ENCODE measurements at regions of chr16 and their contacts with region 1.

Region 1: DNA sequence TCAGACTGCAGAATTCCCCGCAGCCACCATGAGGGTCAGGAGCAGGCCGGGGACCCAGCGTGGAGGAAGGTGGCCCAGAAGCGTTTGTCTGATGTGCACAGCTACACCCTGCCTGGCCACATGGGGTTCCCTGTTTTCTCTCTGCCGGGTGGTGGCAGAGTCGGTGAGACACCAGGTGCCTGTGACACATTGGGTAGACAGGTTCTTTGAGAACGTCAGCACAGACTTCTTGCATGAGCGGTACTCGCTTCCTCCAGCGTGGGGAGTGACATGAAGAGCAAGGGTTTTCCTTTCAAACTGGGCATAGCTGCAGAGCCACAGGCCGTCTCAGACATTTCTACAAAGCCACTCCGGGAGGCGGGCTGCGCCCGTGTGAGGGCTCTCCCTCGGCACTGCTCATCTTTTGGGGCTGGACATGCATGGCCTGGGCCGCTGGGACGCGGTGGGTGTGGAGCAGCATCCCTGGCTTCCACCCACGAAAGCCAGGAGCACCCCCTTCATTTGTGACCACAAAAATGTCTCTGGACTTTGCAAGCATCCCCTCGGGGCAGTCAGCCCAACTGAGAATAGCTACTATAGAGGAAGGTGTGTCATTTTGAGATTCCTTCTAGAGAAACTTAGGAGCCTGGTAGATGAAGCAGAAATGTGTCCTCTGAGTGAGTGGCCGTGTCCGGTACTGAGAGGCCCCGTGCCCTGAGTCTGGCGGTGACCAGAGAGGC is 26.0 kb downstream of the NME3 start:
- DNase-seq: peak; percentile 91 to 94
- H3K4me3 ChIP-seq: peak overlapping the region; percentile 49; the same call in 1 of the 2 replicates
- H3K27ac ChIP-seq: peak overlapping the region; percentile 100
- H3K4me1 ChIP-seq: peaks cover 49% of the 10 kb centered on the region
- H3K27me3 ChIP-seq: no peaks in the 10 kb centered on the region
- CTCF ChIP-seq: no peak; the same call in 1 of the 2 replicates

Region 2: DNA sequence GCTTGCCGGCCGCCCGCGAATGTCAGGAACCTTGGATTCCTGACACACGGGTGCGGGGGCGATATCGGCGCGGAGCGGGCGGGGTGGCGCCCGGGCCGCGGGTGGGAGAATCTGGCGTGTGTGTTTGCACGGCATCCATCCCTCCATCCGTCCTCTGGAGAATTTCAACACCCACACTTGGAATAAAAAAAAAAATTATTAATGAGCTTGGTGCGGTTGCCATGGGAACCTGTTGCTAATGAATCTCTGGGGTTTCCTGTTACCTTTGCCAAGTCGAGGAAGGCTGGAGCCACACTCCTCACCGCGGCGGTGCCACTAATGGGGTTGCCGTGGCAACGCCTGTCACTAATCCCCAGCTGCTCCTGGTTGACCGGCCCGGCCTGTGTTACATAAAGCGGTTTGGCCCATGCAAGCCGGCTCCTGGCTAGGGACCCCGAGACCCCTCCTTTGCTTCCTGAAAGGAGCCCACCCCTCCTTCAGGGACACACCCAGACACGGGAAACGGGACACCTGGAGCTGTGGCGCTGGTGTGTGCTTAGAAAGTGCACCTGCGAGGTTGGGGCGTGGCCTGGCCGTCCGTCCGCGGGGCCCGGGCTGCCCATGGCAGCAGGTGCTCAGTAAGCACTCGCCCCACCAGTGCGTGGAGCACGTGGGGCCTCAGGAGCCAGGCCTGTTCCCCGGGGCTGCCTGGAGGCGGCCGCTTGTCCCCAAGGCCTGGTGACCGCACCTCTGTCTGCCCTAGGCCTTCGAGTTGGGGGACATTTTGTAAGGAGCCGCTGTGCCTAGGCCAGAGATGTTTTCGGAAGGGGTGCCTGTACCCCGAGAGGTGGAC is 577.8 kb before region 1 on chr16:
- CTCF ChIA-PET with region 1: no interaction called
- POLR2A ChIA-PET with region 1: no interaction called
- intact Hi-C with region 1: no loop called
- DNase-seq: no peak
- H3K4me3 ChIP-seq: no peak overlapping the region
- H3K27ac ChIP-seq: no peak overlapping the region
- H3K4me1 ChIP-seq: no peaks in the 10 kb centered on the region
- H3K27me3 ChIP-seq: peaks cover 93% of the 10 kb centered on the region
- CTCF ChIP-seq: no peak

Region 3: DNA sequence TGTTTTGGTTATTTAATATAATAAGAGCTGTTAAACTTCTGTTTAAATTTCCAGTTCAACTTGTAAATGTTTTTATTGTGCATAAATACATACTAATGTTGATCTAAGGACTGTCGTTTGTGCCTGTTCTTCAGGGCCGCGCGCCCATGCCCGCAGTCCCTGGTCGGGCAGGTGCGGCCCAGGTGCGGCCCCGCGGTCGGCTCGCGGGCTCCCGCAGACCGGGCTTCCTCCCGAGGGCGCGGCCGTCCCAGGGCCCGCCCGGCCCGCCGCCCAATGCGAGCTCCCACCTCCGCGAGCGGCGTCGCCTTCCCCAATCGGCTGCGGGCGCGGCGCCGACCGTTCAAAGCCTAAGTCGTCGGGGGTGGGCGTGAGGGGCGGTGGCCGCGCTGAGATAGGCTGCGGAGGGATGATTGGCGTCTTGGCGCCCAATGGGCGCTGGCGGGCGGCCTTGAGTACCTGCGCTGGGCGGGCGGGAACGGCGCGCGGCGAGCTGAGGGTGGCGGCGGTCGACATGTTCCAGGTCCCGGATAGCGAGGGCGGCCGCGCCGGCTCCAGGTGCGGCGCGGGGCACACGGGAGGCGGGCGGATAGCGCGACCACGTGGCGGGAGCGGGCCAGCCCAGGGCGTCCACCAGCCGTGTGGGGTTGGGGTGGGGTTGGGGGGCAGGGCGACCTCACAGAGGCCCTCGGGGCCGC is 67.4 kb before region 1 on chr16 and contains the start of gene JPT2:
- CTCF ChIA-PET with region 1: interaction called, 6 read pairs
- POLR2A ChIA-PET with region 1: interaction called, 4 read pairs
- intact Hi-C with region 1: loop called (anchors 2 kb)
- DNase-seq: peak; percentile 90 to 99
- H3K4me3 ChIP-seq: peak within 1 kb of the TSS; percentile 98
- H3K27ac ChIP-seq: peak within 1 kb of the TSS; percentile 82
- H3K4me1 ChIP-seq: peaks cover 27% of the 10 kb centered on the region
- H3K27me3 ChIP-seq: no peaks in the 10 kb centered on the region
- CTCF ChIP-seq: no peak
- total RNA-seq, gene JPT2: 199 and 244 TPM in 2 replicates

Region 4: DNA sequence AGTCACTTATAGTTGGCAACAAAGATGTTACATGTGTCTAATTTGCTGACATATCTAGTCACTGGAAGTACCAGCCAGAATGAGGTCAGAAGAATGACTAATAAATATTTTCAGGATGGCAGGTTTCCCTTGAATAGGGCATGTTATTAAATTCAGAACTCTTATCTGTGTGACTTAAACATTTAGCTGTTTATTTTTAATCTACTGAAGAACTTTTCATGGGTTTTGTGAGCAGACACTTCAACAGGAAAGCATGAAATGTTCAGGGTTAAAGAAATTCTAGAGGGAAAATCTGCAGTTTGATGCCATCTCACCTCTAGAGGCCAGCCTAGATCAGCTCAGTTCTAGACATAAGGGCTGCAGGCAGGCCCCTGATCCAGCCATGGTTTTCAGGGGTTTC is 54.1 kb before region 1 on chr16:
- CTCF ChIA-PET with region 1: interaction called, 6 read pairs
- POLR2A ChIA-PET with region 1: interaction called, 6 read pairs
- intact Hi-C with region 1: loop called (anchors 1 kb)
- DNase-seq: peak in 1 of 2 experiments; percentile 46
- H3K4me3 ChIP-seq: no peak overlapping the region
- H3K27ac ChIP-seq: peak overlapping the region; percentile 99
- H3K4me1 ChIP-seq: peaks cover 64% of the 10 kb centered on the region
- H3K27me3 ChIP-seq: no peaks in the 10 kb centered on the region
- CTCF ChIP-seq: no peak; the same call in 1 of the 2 replicates

Region 5: DNA sequence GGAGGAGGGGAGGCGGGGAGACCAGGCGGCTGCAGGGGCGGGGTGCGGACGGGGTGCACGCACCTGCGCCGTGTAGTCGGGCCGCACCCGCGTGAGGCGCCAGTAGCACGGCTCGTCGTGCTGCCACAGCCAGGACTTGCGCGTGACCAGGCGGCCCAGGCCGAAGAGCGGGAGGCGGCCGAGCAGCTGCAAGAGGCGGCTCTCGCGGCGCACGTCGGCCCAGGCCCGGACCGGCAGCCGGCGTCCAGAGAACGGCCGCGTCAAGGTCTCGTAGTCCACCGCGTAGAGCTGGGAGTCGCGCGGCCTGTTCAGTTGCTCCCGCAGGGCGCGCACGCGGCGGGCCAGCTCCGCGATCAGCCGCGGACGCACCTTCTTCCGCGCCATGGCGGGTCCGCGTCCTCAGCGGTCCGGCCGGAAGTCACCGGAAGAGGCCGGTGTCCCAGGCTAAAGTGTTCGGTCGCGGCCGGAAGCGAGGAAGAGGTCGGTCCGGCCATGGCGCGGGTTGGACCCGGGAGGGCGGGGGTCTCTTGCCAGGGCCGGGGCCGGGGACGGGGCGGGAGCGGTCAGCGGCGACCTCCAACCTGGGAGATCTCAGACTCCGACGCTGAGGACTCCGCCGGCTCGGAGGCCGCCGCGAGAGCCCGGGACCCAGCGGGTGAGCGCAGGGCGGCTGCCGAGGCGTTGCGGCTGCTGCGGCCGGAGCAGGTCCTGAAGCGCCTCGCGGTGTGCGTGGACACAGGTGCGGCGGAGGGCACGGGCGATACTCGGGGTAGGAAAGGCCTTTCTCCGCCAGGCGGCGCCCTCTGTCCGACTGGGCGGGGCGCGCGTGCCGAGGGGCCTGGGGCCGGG is 27.6 kb after region 1 on chr16 and contains the starts of genes EME2 and MRPS34:
- CTCF ChIA-PET with region 1: interaction called, 5 read pairs
- POLR2A ChIA-PET with region 1: interaction called, 9 read pairs
- intact Hi-C with region 1: loop called (anchors 1 kb)
- DNase-seq: peak; percentile 69 to 93
- H3K4me3 ChIP-seq: peak within 1 kb of the TSS; percentile 77
- H3K27ac ChIP-seq: peak within 1 kb of the TSS; percentile 77
- H3K4me1 ChIP-seq: peaks cover 19% of the 10 kb centered on the region
- H3K27me3 ChIP-seq: no peaks in the 10 kb centered on the region
- CTCF ChIP-seq: peak; percentile 90
- total RNA-seq, gene EME2: 24.2 and 32.4 TPM in 2 replicates
- total RNA-seq, gene MRPS34: 201 and 247 TPM in 2 replicates

Region 6: DNA sequence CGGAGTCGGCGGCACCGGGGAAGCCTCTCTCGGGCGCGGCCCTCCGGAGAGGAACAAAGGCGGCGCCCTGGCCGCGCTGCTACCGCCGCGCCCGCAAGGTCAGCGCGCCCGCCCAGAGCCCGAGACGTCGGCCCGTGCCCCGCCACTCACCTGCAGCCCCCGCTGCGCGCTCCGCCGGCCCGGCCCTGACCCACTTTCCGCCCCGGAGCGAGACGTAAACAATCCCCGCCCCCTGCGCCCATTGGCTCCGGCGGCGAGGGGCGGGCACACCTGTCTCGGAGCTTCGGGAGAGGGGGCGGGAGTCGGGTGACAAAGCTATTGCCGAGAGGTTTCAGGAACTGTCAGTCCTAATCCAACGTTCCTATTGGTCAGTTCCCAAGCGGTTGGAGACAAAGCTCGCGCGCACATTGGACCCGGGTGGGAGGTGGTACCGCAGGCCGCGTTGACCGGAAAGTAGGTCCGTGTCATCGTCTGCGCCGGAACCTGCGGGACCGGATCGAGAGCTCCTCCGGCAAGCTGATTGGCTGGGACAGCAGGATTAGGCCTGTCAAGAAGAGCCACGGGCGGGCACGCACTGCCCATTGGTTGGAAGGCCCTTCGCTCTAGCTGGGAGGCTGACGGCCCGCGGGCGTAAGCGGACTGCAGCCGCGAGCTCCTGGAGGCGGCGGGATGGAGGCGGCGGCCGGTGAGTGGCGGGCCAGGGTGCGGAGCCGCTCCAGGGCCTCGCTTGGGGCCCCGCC is 37.2 kb after region 1 on chr16 and contains the starts of genes NUBP2 and SPSB3:
- CTCF ChIA-PET with region 1: no interaction called
- POLR2A ChIA-PET with region 1: interaction called, 11 read pairs
- intact Hi-C with region 1: no loop called
- DNase-seq: peak; percentile 99 to 100
- H3K4me3 ChIP-seq: peak within 1 kb of the TSS; percentile 93
- H3K27ac ChIP-seq: peak within 1 kb of the TSS; percentile 50; the same call in 1 of the 2 replicates
- H3K4me1 ChIP-seq: peaks cover 15% of the 10 kb centered on the region
- H3K27me3 ChIP-seq: no peaks in the 10 kb centered on the region
- CTCF ChIP-seq: no peak
- total RNA-seq, gene NUBP2: 80.0 and 103 TPM in 2 replicates
- total RNA-seq, gene SPSB3: 58.2 and 86.6 TPM in 2 replicates

Measured in PC-9 (cell line).